Psoas muscle (tissue), 8 donors: ENCODE measurements at regions of chr18 and their contacts with region 1.

Region 1: DNA sequence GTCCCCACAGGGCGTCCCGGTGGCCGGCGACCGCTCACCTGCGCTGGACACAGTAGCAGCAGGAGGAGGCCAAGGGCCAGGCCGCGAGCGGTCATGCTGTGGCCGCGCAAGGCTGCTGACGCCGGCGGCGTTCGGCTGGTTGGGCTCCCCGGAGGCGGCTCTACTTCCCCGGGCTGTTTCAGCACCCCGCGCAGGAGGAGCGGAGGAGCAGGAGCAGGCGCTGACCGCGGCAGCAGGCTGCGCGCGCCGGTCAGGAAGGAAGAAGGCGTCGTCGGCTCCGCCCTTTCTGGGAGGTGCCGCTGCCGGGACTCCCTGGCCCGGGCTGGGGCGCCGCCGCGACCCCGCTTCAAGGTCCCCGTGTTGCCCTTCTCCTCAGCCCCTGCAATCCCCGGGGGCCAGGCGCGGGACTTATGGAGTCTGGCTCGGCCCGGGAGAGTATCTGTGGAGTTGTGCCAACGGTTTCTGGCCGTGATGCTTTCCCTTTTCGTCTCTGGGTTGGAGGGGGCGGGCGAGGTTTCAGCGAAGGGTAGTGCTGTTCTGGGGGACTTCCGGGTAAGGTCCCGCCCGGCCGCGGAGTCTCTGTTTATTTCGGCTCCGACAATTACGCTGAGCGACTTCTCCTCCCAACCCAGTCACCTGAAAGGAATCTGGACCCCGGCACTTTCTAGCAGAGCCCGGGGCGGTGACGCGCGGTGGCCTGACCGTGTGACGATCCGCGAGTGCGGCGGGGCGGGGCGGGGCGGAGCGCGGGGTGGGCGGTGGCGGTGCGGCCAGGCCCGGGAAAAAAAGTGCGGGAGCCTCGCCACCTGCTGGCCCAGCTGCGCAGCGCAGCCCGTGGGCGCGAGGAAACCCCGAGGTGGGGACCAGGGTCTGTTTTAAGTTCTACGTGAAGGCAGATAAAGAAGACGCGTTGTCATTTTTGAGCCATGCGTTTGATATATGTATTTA is at the start of gene NPC1:
- DNase-seq: peak; percentile 94 to 97
- ATAC-seq: peak; percentile 94 to 97 (median 96)
- H3K4me3 ChIP-seq: peak within 1 kb of the TSS; percentile 97
- H3K27ac ChIP-seq: peak within 1 kb of the TSS; percentile 100
- H3K4me1 ChIP-seq: peaks cover 31% of the 10 kb centered on the region
- H3K27me3 ChIP-seq: no peaks in the 10 kb centered on the region
- CTCF ChIP-seq: peak; percentile 98
- total RNA-seq, gene NPC1: 27.6 to 58.0 (median 41.8) TPM

Region 2: GRCh38 chr18:23515911-23516546 is 70.5 kb before region 1 on chr18:
- intact Hi-C with region 1: loop called (anchors 2 to 5 kb)
- DNase-seq: peak; percentile 48 to 74
- ATAC-seq: peak; percentile 87 to 96 (median 94)
- H3K4me3 ChIP-seq: no peak overlapping the region
- H3K27ac ChIP-seq: no peak overlapping the region
- H3K4me1 ChIP-seq: no peaks in the 10 kb centered on the region
- H3K27me3 ChIP-seq: no peaks in the 10 kb centered on the region
- CTCF ChIP-seq: peak; percentile 87